Breast epithelium (tissue), 4 donors: ENCODE measurements at regions of chr5 and their contacts with region 1.

Region 1: DNA sequence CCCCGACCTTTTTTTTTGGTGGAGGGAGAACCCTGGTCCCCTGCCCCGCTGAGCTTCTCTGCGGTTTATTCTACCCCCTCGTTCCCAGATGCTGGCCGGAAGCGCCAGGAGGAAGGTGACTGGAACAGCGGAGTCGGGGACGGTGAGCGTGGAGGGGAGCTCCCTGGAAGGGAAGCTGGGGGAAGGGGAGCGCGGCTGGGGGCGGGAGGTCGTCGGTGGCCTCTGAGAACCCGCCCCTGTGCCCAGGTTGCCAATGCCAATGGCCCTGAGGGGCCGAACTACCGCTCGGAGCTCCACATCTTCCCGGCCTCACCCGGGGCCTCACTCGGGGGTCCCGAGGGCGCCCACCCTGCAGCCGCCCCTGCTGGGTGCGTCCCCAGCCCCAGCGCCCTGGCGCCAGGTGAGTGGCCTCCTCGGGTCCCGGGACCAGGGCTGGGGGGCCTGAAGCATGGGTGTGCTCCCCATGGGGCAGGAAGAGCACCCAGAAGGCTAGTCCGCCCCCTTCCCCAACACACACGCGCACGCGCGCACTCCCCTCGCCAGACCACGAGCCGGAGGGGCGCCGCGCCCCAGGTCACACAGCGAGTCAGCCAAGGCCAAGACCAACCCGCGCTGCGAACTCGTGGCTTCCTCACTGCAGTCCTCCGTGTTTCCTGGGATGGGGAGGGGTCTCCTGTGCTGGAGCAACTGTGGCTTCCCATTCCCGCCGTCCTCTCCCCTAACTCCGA is 10.6 kb downstream of the MYOZ3 start:
- DNase-seq: no peak
- H3K4me3 ChIP-seq: peak overlapping the region; percentile 44 to 82 (median 52)
- H3K27ac ChIP-seq: peak overlapping the region; percentile 45 to 72
- H3K4me1 ChIP-seq: peaks cover 9 to 16% of the 10 kb centered on the region in 2 donors
- H3K27me3 ChIP-seq: no peaks in the 10 kb centered on the region
- CTCF ChIP-seq: no peak
- POLR2A ChIP-seq: no peak

Region 2: DNA sequence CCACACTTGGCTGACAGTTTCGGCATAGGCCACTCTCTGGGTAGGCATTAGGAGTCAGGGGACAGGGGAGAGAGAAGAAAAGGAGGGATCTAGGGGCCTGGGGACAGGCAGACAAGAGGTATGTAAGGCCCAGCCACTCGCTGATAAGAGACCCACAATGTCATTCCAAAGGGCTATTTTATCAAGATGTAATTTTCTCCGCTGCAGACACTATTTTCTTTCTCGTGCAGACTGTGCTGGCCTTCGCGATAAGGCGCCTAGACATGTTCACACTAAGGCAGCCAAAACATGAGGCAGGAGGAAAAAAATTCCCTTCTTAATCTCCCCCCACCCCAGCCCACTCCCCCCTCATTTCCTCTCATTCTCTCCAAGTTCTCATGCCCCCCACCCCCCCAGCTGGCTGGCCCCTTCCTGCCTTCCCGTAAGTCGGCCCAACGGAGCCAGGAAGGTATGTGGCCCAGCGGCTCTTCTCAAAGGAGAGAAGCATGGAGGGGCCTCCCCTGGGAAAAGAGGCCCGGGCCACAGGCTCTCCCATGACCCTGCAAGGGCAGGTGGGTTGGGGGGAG is 76.1 kb before region 1 on chr5:
- intact Hi-C with region 1: loop called (anchors 2 kb)
- DNase-seq: no peak
- H3K4me3 ChIP-seq: no peak overlapping the region
- H3K27ac ChIP-seq: peak overlapping the region in 1 of 2 donors; percentile 32
- H3K4me1 ChIP-seq: peaks cover 5 to 10% of the 10 kb centered on the region in 2 donors
- H3K27me3 ChIP-seq: no peaks in the 10 kb centered on the region
- CTCF ChIP-seq: no peak
- POLR2A ChIP-seq: no peak